Sciatic nerve (tissue), 2 donors: ENCODE measurements at regions of chr10 and their contacts with region 1.

Region 1: GRCh38 chr10:126712681-126713080 is 42.2 kb upstream of the C10orf90 start:
- DNase-seq: no peak
- ATAC-seq: no peak

Region 2: DNA sequence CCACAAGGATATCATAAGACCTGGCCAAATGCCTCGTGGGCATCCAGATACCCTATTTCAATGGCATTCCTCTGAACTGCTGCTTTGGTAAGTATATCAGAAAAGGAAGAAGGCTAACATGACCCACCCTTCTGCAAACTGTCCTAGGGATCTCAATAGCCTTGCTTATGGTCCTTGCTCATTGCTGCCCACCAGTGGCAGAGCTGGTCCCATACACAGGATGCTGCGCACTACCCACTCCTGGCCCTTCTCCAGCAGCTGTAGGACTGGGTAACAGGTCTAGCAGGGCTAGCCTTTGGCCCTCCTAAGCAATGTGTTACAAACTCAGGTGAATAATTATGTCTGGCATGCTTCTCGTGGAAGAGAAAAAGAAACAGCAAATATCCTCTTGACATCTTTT is 114.7 kb before region 1 on chr10:
- intact Hi-C with region 1: no loop called
- DNase-seq: no peak
- ATAC-seq: peak; percentile 48

Region 3: DNA sequence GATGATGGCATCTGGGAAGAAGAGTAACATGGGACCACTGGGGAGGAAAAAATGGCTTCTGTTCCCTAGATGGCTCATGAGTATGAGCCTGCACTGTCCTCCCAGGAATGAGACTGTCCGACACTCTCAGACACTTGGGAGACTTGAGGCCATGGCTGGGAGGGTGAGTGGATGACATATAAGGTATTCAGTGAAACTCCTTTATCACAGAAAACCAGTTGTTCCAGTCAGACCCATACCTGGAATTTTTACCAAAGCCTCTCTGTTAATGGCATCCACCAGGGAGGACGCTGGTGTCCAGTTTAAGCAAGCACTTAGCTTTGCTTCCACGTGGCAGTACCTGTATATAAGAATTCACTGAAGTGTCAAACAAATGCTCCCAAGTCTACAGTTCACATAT is 74.5 kb after region 1 on chr10:
- intact Hi-C with region 1: loop called (anchors 2 kb)
- DNase-seq: no peak
- ATAC-seq: no peak

Region 4: GRCh38 chr10:126813432-126813831 is 100.8 kb after region 1 on chr10:
- intact Hi-C with region 1: no loop called
- DNase-seq: no peak
- ATAC-seq: no peak